T-cell (primary cell): ENCODE measurements at regions of chr4 and their contacts with region 1.

Region 1: DNA sequence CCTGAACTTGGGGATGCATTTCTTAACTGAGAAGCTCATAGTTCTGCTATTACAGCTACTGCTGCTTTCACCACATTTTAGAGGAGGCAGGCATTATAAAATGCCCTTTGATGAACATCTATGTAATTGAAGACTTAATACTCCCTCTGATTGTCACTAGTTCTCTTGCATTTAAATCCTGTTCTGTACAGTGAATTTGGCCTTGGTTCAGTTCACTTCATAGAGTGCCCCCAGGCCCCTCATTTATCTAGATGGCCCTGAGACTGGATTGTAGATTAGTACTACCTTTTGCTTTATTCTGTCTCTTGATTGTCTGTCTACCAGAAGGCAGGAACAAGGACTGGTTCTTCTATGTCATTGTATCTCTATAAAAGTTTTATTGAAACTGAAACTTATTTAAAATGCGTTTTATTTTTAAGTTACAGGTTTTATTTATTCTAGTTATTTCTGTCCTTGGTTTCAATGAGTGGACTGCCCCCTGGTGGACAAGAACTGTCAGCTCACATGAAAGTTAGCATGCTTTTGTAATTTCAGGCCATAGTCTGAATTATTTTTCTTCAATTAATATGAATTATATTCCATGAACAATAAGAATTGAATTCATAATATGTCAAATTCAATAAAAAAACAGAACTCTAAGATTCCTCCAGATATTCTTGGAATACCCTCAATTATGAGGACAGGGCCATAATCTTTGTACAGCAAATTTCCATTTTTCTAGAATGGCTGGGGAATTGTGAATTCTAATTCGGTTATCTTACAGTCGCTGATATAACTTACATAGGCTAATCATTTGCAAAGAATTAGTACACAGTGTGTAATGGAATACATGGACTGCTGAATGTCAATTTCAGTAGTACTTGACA is 47.2 kb upstream of the TMEM33 start:
- DNase-seq: peak in 21 of 35 experiments; percentile 6 to 68 (median 29)
- ATAC-seq: no peak
- H3K4me3 ChIP-seq: no peak overlapping the region
- H3K4me3 Mint-ChIP-seq: no peak overlapping the region
- H3K27ac ChIP-seq: no peak overlapping the region
- H3K27ac Mint-ChIP-seq: no peak overlapping the region
- H3K4me1 ChIP-seq: peaks cover 0 to under 1% of the 10 kb centered on the region in 2 experiments
- H3K4me1 Mint-ChIP-seq: peaks cover 0 to 1% (median 1%) of the 10 kb centered on the region in 3 donors
- H3K27me3 ChIP-seq: no peaks in the 10 kb centered on the region
- H3K27me3 Mint-ChIP-seq: peaks cover 34 to 38% of the 10 kb centered on the region in 2 donors

Region 2: DNA sequence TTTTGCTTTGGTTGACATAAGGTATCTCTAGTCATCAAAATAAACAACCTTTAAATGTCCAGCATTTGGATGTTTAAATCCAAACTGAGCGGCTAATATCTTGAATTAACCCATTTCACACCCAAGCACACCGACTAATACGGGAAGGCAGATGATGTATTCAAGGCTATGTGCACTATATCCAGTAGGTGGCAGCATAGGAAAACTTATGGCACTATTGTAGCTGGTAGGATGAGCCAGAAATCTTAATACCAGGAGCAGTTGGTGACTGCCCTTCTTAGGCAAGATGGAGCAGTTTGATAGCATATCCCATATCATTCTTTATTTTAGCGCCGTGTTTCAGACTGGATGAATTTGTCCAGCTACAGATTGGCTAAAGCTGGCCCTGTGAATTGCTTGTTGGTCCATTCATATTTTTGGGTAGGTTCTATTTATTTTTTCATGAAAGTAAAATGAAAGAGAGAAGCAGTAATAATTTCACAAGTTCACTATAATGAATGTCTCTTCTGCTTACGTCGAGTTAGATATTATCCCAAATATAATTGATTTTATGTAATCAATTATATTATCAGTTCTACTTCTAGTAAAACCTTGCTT is 606.9 kb before region 1 on chr4:
- CTCF ChIA-PET with region 1: interaction called, 4 to 12 read pairs
- POLR2A ChIA-PET with region 1: no interaction called
- DNase-seq: peak in 8 of 35 experiments; percentile 3 to 67 (median 15)
- ATAC-seq: peak in 3 of 4 experiments; percentile 52 to 67 (median 64)
- H3K4me3 ChIP-seq: no peak overlapping the region
- H3K4me3 Mint-ChIP-seq: no peak overlapping the region
- H3K27ac ChIP-seq: no peak overlapping the region
- H3K27ac Mint-ChIP-seq: no peak overlapping the region
- H3K4me1 ChIP-seq: no peaks in the 10 kb centered on the region
- H3K4me1 Mint-ChIP-seq: no peaks in the 10 kb centered on the region
- H3K27me3 ChIP-seq: peaks cover 0 to 3% of the 10 kb centered on the region in 2 experiments
- H3K27me3 Mint-ChIP-seq: peaks cover 13 to 16% of the 10 kb centered on the region in 2 donors

Region 3: GRCh38 chr4:41940834-41941233 is 52.8 kb after region 1 on chr4:
- CTCF ChIA-PET with region 1: no interaction called
- POLR2A ChIA-PET with region 1: interaction called in 1 of 2 experiments, 14 read pairs
- DNase-seq: no peak
- ATAC-seq: no peak
- H3K4me3 ChIP-seq: no peak overlapping the region
- H3K4me3 Mint-ChIP-seq: no peak overlapping the region
- H3K27ac ChIP-seq: no peak overlapping the region
- H3K27ac Mint-ChIP-seq: no peak overlapping the region
- H3K4me1 ChIP-seq: peaks cover 7% of the 10 kb centered on the region in 2 experiments
- H3K4me1 Mint-ChIP-seq: peaks cover 43 to 52% (median 49%) of the 10 kb centered on the region in 3 donors
- H3K27me3 ChIP-seq: no peaks in the 10 kb centered on the region
- H3K27me3 Mint-ChIP-seq: no peaks in the 10 kb centered on the region